BJ (cell line): ENCODE measurements at regions of chr12 and their contacts with region 1.

Region 1: GRCh38 chr12:32659908-32660440 is 19.1 kb upstream of the DNM1L start:
- DNase-seq: peak; percentile 63
- H3K4me3 ChIP-seq: no peak overlapping the region
- H3K27me3 ChIP-seq: no peaks in the 10 kb centered on the region
- CTCF ChIP-seq: no peak

Region 2: DNA sequence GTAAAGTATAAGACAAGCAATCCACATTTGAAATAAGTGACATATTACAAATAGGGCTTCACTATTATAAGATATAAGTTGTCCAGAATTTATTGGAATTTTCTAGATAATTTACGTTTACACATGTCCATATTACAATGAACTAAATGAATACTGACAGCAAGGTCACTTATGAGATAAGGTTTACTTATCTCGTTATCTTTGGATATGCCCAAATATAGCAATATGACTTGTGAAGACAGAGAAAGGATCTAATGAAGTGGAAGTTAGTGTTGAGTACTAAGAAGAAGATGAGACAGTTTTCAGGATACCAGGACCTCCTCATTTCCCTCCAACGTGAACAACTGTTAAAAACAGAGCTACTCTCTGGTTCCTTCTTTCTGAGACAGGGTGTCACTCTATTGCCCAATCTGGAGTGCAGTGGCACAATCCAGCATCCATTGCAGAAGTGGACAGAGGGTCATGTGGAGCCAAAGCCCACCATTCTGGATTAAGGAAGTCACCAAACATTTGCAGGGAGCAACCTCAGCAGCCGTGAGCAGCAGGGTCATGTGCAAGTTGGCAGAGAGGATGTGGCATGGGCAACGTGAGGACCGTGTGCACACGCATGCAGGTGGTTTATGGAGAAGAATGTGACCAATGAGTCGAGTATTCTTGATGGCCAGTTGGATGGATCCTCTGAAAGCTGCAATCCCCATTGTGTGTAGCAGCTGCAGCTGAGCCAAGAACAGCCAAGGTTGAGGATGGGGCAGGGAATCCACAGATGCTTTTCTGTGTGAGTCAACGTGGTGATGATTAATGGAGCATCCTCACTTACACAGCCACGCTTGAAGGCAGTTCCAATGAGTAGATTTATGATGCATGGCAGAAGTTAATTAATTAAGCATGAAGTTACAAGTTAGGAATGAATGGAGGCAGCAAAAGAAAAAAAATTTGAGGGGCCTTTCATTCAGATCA is 442.3 kb before region 1 on chr12:
- CTCF ChIA-PET with region 1: no interaction called
- POLR2A ChIA-PET with region 1: interaction called, 16 read pairs
- DNase-seq: peak; percentile 45
- H3K4me3 ChIP-seq: no peak overlapping the region
- H3K27me3 ChIP-seq: no peaks in the 10 kb centered on the region
- CTCF ChIP-seq: no peak

Region 3: GRCh38 chr12:32455607-32456071 is 204.3 kb before region 1 on chr12:
- CTCF ChIA-PET with region 1: interaction called, 55 read pairs
- POLR2A ChIA-PET with region 1: no interaction called
- DNase-seq: peak; percentile 45
- H3K4me3 ChIP-seq: peak overlapping the region; percentile 18; the same call in 1 of the 2 replicates
- H3K27me3 ChIP-seq: no peaks in the 10 kb centered on the region
- CTCF ChIP-seq: peak; percentile 58

Region 4: GRCh38 chr12:32647275-32647674 is 12.7 kb before region 1 on chr12:
- CTCF ChIA-PET with region 1: interaction called, 15 read pairs
- POLR2A ChIA-PET with region 1: no interaction called
- DNase-seq: no peak
- H3K4me3 ChIP-seq: no peak overlapping the region
- H3K27me3 ChIP-seq: no peaks in the 10 kb centered on the region
- CTCF ChIP-seq: no peak

Region 5: DNA sequence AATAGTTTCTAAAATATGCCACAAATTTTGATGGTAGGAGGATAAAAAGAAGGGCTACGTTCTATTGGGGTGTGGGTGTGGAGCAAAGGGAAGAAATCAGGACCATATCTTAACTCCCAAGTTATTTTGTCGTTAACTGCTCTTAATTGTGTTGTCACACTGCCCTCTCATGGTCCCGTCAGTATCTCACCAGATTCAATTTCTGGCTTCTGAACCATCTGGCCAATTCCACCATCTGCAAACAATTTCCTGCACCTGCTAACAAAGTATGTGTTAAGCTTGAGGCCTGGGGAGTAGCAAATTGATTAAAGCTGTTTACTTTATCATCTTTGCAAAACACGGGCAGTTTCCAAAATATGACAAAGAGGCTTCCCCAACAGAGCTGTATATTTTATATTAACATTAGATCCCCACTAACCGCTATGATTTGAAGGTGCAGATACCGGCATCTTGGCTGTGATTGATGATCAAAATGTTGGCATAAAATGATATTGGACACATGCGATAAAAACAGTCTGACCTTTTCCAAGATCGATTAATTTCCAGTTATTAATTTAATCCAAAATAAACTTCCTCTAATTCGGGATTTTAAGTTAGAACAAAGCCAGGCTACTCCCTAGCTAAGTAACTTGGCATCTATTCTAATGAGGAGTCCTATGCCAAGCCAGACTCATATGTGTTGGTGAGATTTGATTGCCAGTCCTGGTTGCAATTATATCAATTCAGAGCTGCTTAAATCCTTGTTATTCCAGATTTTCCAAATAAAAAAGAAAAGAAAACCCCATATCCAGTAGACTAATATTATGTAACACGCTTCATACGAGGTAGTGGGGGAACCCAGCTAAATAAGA is 12.2 kb after region 1 on chr12:
- CTCF ChIA-PET with region 1: interaction called, 15 read pairs
- POLR2A ChIA-PET with region 1: no interaction called
- DNase-seq: peak; percentile 74
- H3K4me3 ChIP-seq: no peak overlapping the region
- H3K27me3 ChIP-seq: no peaks in the 10 kb centered on the region
- CTCF ChIP-seq: peak; percentile 59